ENCODE measurements at regions of chr7 and their contacts with region 1.

Region 1: GRCh38 chr7:151110941-151111645 is 24.8 kb downstream of the AGAP3 start:
- DNase-seq: no peak
- ATAC-seq: peak; percentile 60
- H3K4me3 ChIP-seq: no peak overlapping the region
- H3K27ac ChIP-seq: peak overlapping the region; percentile 17; the same call in 1 of the 2 replicates
- H3K4me1 ChIP-seq: peaks cover 28 to 70% of the 10 kb centered on the region in 2 experiments
- H3K27me3 ChIP-seq: no peaks in the 10 kb centered on the region
- CTCF ChIP-seq: peak in 2 of 3 experiments; percentile 86 to 88; a peak in 4 of 6 replicates
- POLR2A ChIP-seq: no peak
- RAD21 ChIP-seq: no peak

Region 2: DNA sequence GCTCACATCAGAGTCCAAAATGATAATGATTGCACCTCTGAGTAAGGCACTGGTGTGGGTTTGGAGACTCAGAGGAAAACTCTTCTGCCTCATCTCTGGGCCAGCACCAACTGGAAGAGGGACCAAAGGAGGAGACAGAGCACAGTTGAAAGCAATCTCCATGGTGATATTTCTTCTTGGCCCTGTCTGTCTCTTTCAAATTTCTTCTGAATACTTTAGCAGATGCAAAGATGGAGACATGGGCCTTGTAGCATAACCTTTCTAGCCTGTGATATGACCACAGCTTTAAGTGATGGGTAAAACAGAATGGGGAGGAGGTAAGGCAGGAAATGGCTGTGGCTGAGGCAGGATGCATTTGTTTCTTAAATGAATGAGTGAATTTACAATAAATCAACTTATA is 608.6 kb before region 1 on chr7:
- CTCF ChIA-PET with region 1: no interaction called
- POLR2A ChIA-PET with region 1: no interaction called
- RAD21 ChIA-PET with region 1: no interaction called
- intact Hi-C with region 1: no loop called
- DNase-seq: no peak
- ATAC-seq: no peak
- H3K4me3 ChIP-seq: no peak overlapping the region
- H3K27ac ChIP-seq: no peak overlapping the region
- H3K4me1 ChIP-seq: no peaks in the 10 kb centered on the region
- H3K27me3 ChIP-seq: no peaks in the 10 kb centered on the region
- CTCF ChIP-seq: no peak
- POLR2A ChIP-seq: no peak
- RAD21 ChIP-seq: no peak

Region 3: GRCh38 chr7:150778738-150779301 is 332.3 kb before region 1 on chr7:
- CTCF ChIA-PET with region 1: no interaction called
- POLR2A ChIA-PET with region 1: interaction called, 3 read pairs
- RAD21 ChIA-PET with region 1: no interaction called
- intact Hi-C with region 1: loop called (anchors 5 kb)
- DNase-seq: peak; percentile 68
- ATAC-seq: peak; percentile 95
- H3K4me3 ChIP-seq: peak overlapping the region in 1 of 2 experiments; percentile 34; a peak in 1 of 4 replicates
- H3K27ac ChIP-seq: no peak overlapping the region
- H3K4me1 ChIP-seq: peaks cover 0 to 4% of the 10 kb centered on the region in 2 experiments; a peak in 2 of 4 replicates
- H3K27me3 ChIP-seq: 0 out of 2 replicates have a peak, but pooled peaks cover 8% of the 10 kb centered on the region
- CTCF ChIP-seq: peak; percentile 77 to 93 (median 93)
- POLR2A ChIP-seq: no peak
- RAD21 ChIP-seq: peak; percentile 87

Region 4: DNA sequence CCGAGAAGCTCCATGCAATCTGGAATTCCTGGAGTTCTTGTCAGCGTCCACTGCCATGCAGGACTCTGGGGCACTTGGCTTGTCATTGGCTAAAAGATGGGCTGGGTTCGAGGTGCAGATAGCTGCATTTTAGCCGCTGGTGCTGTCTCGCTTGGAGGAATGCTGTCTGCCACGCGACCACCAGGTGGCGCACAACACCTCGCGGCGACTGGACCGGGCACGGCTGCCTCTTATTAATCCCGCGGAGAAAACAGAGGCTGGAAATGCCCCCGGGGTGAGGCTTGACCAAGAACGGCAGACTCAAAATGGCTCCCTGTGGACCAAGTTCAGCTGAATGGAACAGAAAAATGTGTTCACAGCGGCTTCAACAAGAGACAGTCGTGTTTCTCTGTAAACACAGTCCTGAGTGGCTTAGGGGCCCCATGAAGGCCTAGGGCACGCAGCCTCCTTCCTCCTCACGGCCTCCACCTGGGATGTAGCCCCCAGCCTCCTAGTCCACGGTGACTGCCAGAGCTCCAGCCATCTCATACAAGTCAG is 212.6 kb before region 1 on chr7:
- CTCF ChIA-PET with region 1: interaction called, 7 read pairs
- POLR2A ChIA-PET with region 1: no interaction called
- RAD21 ChIA-PET with region 1: no interaction called
- intact Hi-C with region 1: loop called (anchors 1 kb)
- DNase-seq: peak; percentile 51
- ATAC-seq: peak; percentile 95
- H3K4me3 ChIP-seq: no peak overlapping the region
- H3K27ac ChIP-seq: no peak overlapping the region
- H3K4me1 ChIP-seq: peaks cover 0 to 12% of the 10 kb centered on the region in 2 experiments; a peak in 2 of 4 replicates
- H3K27me3 ChIP-seq: no peaks in the 10 kb centered on the region
- CTCF ChIP-seq: peak; percentile 89 to 95 (median 89)
- POLR2A ChIP-seq: no peak
- RAD21 ChIP-seq: peak; percentile 89

Region 5: GRCh38 chr7:150962553-150963399 is 148.3 kb before region 1 on chr7:
- CTCF ChIA-PET with region 1: interaction called, 25 read pairs
- POLR2A ChIA-PET with region 1: no interaction called
- RAD21 ChIA-PET with region 1: interaction called in 1 of 2 experiments, 3 read pairs
- intact Hi-C with region 1: loop called (anchors 1 kb)
- DNase-seq: no peak
- ATAC-seq: peak; percentile 84
- H3K4me3 ChIP-seq: no peak overlapping the region
- H3K27ac ChIP-seq: no peak overlapping the region
- H3K4me1 ChIP-seq: peaks cover 20 to 27% of the 10 kb centered on the region in 2 experiments
- H3K27me3 ChIP-seq: no peaks in the 10 kb centered on the region
- CTCF ChIP-seq: peak; percentile 87 to 94 (median 90)
- POLR2A ChIP-seq: no peak
- RAD21 ChIP-seq: peak; percentile 91

Region 6: DNA sequence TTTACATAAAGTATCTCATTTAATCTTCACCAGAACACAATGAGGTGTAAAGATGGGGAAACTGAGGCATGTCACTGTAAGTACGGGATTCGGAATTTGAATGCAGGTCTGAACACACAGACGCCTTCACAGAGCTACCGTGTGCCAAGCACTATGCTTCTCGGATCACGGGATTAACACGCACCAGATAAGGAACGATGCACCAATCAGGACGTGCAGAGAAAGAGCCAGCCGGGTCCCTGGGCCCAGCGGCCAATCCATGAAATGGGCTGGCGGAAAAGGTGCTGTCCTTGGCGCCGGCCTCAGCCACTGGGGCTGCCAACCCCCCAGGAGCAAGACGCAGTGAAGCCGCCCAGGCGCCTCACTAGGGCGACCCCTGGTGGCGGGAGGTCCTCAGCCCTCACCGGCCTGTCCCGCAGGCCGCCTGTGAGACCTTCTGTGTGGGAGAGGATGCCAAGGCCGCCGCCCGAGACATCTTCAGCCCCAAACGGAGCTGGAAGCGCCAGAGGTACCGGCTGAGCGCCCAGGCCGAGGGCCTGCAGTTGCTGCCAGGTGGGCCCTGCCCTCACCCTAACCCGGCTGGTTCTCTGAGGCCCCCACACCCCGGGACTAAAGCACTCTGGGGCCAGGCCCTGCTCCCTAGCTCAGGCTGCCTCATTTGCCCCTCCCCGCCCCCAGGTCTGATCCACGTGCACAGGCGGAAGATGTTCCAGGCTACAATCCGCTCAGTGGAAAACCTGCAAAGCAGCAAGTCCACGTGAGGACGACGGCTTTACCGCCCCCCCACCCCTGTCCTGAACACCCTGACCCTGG is 102.4 kb before region 1 on chr7:
- CTCF ChIA-PET with region 1: interaction called, 9 read pairs
- POLR2A ChIA-PET with region 1: interaction called, 3 read pairs
- RAD21 ChIA-PET with region 1: interaction called in 1 of 2 experiments, 5 read pairs
- intact Hi-C with region 1: loop called (anchors 1 kb)
- DNase-seq: peak; percentile 87
- ATAC-seq: peak; percentile 86
- H3K4me3 ChIP-seq: peak overlapping the region; percentile 72 to 73
- H3K27ac ChIP-seq: peak overlapping the region; percentile 71
- H3K4me1 ChIP-seq: peaks cover 16 to 51% of the 10 kb centered on the region in 2 experiments; a peak in 3 of 4 replicates
- H3K27me3 ChIP-seq: no peaks in the 10 kb centered on the region
- CTCF ChIP-seq: peak in 2 of 3 experiments; percentile 85 to 94; a peak in 4 of 6 replicates
- POLR2A ChIP-seq: peak; percentile 83
- RAD21 ChIP-seq: no peak

Region 7: GRCh38 chr7:151028131-151028947 is 82.8 kb before region 1 on chr7 and contains the start of gene ABCB8:
- CTCF ChIA-PET with region 1: interaction called, 18 read pairs
- POLR2A ChIA-PET with region 1: no interaction called
- RAD21 ChIA-PET with region 1: no interaction called
- intact Hi-C with region 1: loop called (anchors 5 kb)
- DNase-seq: peak; percentile 99
- ATAC-seq: peak; percentile 90
- H3K4me3 ChIP-seq: peak within 1 kb of the TSS; percentile 72
- H3K27ac ChIP-seq: peak within 1 kb of the TSS; percentile 60
- H3K4me1 ChIP-seq: peaks cover 6 to 58% of the 10 kb centered on the region in 2 experiments
- H3K27me3 ChIP-seq: no peaks in the 10 kb centered on the region
- CTCF ChIP-seq: peak in 2 of 3 experiments; percentile 41 to 46; a peak in 4 of 6 replicates
- POLR2A ChIP-seq: peak; percentile 33
- RAD21 ChIP-seq: no peak
- total RNA-seq, gene ABCB8: 55.2 TPM

Region 8: GRCh38 chr7:151038951-151039849 is 71.9 kb before region 1 on chr7:
- CTCF ChIA-PET with region 1: no interaction called
- POLR2A ChIA-PET with region 1: no interaction called
- RAD21 ChIA-PET with region 1: no interaction called
- intact Hi-C with region 1: no loop called
- DNase-seq: no peak
- ATAC-seq: peak; percentile 82
- H3K4me3 ChIP-seq: peak overlapping the region in 1 of 2 experiments; percentile 7; a peak in 2 of 4 replicates
- H3K27ac ChIP-seq: peak overlapping the region; percentile 28
- H3K4me1 ChIP-seq: peaks cover 16 to 19% of the 10 kb centered on the region in 2 experiments
- H3K27me3 ChIP-seq: no peaks in the 10 kb centered on the region
- CTCF ChIP-seq: no peak
- POLR2A ChIP-seq: no peak
- RAD21 ChIP-seq: no peak

Region 9: GRCh38 chr7:151070223-151070960 is 40.7 kb before region 1 on chr7:
- CTCF ChIA-PET with region 1: no interaction called
- POLR2A ChIA-PET with region 1: no interaction called
- RAD21 ChIA-PET with region 1: no interaction called
- intact Hi-C with region 1: no loop called
- DNase-seq: no peak
- ATAC-seq: no peak
- H3K4me3 ChIP-seq: no peak overlapping the region
- H3K27ac ChIP-seq: no peak overlapping the region
- H3K4me1 ChIP-seq: no peaks in the 10 kb centered on the region
- H3K27me3 ChIP-seq: no peaks in the 10 kb centered on the region
- CTCF ChIP-seq: no peak
- POLR2A ChIP-seq: no peak
- RAD21 ChIP-seq: no peak

Measured in HCT116 (cell line).